ENCODE measurements at regions of chr12 and their contacts with region 1.

Region 1: GRCh38 chr12:122463806-122464205 is 36.9 kb downstream of the ZCCHC8 start:
- DNase-seq: no peak
- H3K4me3 ChIP-seq: no peak overlapping the region
- H3K4me3 Mint-ChIP-seq: no peak overlapping the region
- H3K27ac Mint-ChIP-seq: peak overlapping the region; percentile 86
- H3K4me1 ChIP-seq: peaks cover 37% of the 10 kb centered on the region
- H3K4me1 Mint-ChIP-seq: no peaks in the 10 kb centered on the region
- H3K27me3 ChIP-seq: no peaks in the 10 kb centered on the region
- H3K27me3 Mint-ChIP-seq: no peaks in the 10 kb centered on the region
- CTCF ChIP-seq: no peak

Region 2: GRCh38 chr12:122393817-122394216 is 70.0 kb before region 1 on chr12:
- CTCF ChIA-PET with region 1: no interaction called
- POLR2A ChIA-PET with region 1: no interaction called
- intact Hi-C with region 1: no loop called
- DNase-seq: no peak
- H3K4me3 ChIP-seq: no peak overlapping the region
- H3K4me3 Mint-ChIP-seq: no peak overlapping the region
- H3K27ac Mint-ChIP-seq: no peak overlapping the region
- H3K4me1 ChIP-seq: peaks cover 12% of the 10 kb centered on the region
- H3K4me1 Mint-ChIP-seq: peaks cover under 1% of the 10 kb centered on the region
- H3K27me3 ChIP-seq: no peaks in the 10 kb centered on the region
- H3K27me3 Mint-ChIP-seq: no peaks in the 10 kb centered on the region
- CTCF ChIP-seq: no peak

Region 3: GRCh38 chr12:122406701-122407164 is 57.1 kb before region 1 on chr12:
- CTCF ChIA-PET with region 1: no interaction called
- POLR2A ChIA-PET with region 1: no interaction called
- intact Hi-C with region 1: no loop called
- DNase-seq: peak in 1 of 2 experiments; percentile 65
- H3K4me3 ChIP-seq: no peak overlapping the region
- H3K4me3 Mint-ChIP-seq: peak overlapping the region; percentile 35
- H3K27ac Mint-ChIP-seq: peak overlapping the region; percentile 93
- H3K4me1 ChIP-seq: peaks cover 26% of the 10 kb centered on the region
- H3K4me1 Mint-ChIP-seq: peaks cover 5% of the 10 kb centered on the region
- H3K27me3 ChIP-seq: no peaks in the 10 kb centered on the region
- H3K27me3 Mint-ChIP-seq: no peaks in the 10 kb centered on the region
- CTCF ChIP-seq: no peak

Region 4: DNA sequence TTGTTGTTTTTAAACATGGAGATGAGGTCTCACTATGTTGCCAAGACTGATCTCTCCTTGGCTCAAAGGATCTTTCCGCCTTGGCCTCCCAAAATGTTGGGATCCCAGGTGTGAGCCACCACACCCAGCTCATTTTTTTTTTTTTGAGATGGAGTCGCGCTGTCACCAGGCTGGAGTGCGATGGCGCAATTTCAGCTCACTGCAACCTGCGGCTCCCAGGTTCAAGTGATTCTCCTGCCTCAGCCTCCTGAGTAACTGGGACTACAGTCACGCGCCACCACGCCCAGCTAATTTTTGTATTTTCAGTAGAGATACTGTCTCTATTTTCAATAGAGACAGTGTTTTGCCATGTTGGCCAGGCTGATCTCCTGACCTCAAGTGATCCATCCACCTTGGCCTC is 36.4 kb before region 1 on chr12:
- CTCF ChIA-PET with region 1: no interaction called
- POLR2A ChIA-PET with region 1: no interaction called
- intact Hi-C with region 1: loop called (anchors 2 kb)
- DNase-seq: no peak
- H3K4me3 ChIP-seq: no peak overlapping the region
- H3K4me3 Mint-ChIP-seq: no peak overlapping the region
- H3K27ac Mint-ChIP-seq: no peak overlapping the region
- H3K4me1 ChIP-seq: peaks cover 20% of the 10 kb centered on the region
- H3K4me1 Mint-ChIP-seq: peaks cover 14% of the 10 kb centered on the region
- H3K27me3 ChIP-seq: no peaks in the 10 kb centered on the region
- H3K27me3 Mint-ChIP-seq: no peaks in the 10 kb centered on the region
- CTCF ChIP-seq: no peak

Region 5: DNA sequence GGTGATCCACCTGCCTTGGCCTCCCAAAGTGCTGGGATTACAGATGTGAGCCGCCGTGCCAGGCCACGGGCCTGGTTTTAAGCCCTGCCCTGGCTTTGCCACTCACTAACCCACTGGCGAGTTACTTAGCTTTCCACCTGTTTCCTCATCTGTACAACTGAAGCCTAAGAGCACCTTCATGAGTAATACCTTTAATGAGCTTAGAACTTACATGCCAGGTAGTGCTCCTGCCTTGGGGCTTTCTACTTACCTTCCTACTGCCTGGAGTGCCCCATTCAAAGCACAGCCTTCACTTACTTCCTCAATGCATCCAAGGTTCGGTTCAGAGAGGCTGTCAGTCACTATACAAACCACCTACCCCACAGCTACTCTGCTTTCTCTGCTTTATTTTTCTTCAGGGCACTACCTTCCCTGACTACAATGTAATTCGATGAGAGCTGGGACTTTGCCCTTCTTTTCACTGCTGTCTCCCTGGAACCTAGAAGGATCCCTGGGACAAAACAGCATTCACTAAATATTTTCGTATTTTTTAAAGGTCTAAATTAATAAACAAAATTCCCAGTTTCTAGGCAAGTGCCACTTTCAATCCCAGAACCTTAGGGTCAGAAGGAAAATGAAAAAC is 23.1 kb after region 1 on chr12:
- CTCF ChIA-PET with region 1: no interaction called
- POLR2A ChIA-PET with region 1: no interaction called
- intact Hi-C with region 1: no loop called
- DNase-seq: no peak
- H3K4me3 ChIP-seq: no peak overlapping the region
- H3K4me3 Mint-ChIP-seq: no peak overlapping the region
- H3K27ac Mint-ChIP-seq: no peak overlapping the region
- H3K4me1 ChIP-seq: peaks cover 19% of the 10 kb centered on the region
- H3K4me1 Mint-ChIP-seq: peaks cover 18% of the 10 kb centered on the region
- H3K27me3 ChIP-seq: no peaks in the 10 kb centered on the region
- H3K27me3 Mint-ChIP-seq: no peaks in the 10 kb centered on the region
- CTCF ChIP-seq: no peak

Region 6: GRCh38 chr12:122558745-122559641 is 95.2 kb after region 1 on chr12:
- CTCF ChIA-PET with region 1: no interaction called
- POLR2A ChIA-PET with region 1: no interaction called
- intact Hi-C with region 1: no loop called
- DNase-seq: no peak
- H3K4me3 ChIP-seq: no peak overlapping the region
- H3K4me3 Mint-ChIP-seq: no peak overlapping the region
- H3K27ac Mint-ChIP-seq: no peak overlapping the region
- H3K4me1 ChIP-seq: no peaks in the 10 kb centered on the region
- H3K4me1 Mint-ChIP-seq: no peaks in the 10 kb centered on the region
- H3K27me3 ChIP-seq: no peaks in the 10 kb centered on the region
- H3K27me3 Mint-ChIP-seq: no peaks in the 10 kb centered on the region
- CTCF ChIP-seq: no peak